Natural killer cell (primary cell): ENCODE measurements at regions of chr3 and their contacts with region 1.

Region 1: DNA sequence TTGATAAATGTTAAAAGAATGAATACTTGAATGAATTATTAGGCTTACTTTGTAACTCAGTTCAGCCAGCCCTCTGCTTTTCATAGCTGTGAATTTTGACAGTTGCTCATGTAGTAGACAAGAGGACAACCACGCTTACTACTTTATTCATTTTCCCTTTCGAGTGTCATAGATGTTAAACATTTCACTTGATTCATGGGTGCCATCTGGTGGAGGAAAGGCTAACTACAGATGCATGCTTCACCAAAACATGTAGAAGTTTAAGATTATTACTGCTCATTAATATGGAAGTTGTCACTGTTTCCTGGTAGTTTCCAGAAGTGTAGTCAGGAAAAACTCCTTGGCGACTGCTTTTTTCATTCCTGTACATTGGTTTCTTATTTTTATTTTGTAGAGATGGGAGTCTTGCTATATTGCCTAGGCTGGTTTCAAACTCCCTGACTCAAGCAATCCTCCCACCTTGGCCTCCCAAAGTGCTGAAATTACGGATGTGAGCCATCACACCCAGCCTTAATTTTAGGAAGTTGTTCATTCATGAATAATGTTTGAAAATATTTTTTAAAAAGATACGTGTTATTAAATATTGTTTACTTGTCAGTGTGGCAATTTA is 163.2 kb downstream of the B3GALNT1 start:
- DNase-seq: peak; percentile 62 to 83
- ATAC-seq: peak; percentile 89 to 99 (median 98)
- H3K4me3 ChIP-seq: no peak overlapping the region
- H3K4me3 Mint-ChIP-seq: no peak overlapping the region
- H3K27ac ChIP-seq: no peak overlapping the region
- H3K27ac Mint-ChIP-seq: peak overlapping the region in 1 of 2 donors; percentile 67
- H3K4me1 ChIP-seq: no peaks in the 10 kb centered on the region
- H3K4me1 Mint-ChIP-seq: peaks cover 12 to 20% of the 10 kb centered on the region in 2 donors
- H3K27me3 ChIP-seq: no peaks in the 10 kb centered on the region
- H3K27me3 Mint-ChIP-seq: no peaks in the 10 kb centered on the region
- CTCF ChIP-seq: peak; percentile 89

Region 2: GRCh38 chr3:160686955-160687535 is 254.9 kb before region 1 on chr3:
- intact Hi-C with region 1: loop called (anchors 5 kb)
- DNase-seq: peak in 1 of 2 donors; percentile 40
- ATAC-seq: no peak
- H3K4me3 ChIP-seq: no peak overlapping the region
- H3K4me3 Mint-ChIP-seq: no peak overlapping the region
- H3K27ac ChIP-seq: no peak overlapping the region
- H3K27ac Mint-ChIP-seq: no peak overlapping the region
- H3K4me1 ChIP-seq: no peaks in the 10 kb centered on the region
- H3K4me1 Mint-ChIP-seq: no peaks in the 10 kb centered on the region
- H3K27me3 ChIP-seq: no peaks in the 10 kb centered on the region
- H3K27me3 Mint-ChIP-seq: peaks cover 0 to 2% of the 10 kb centered on the region in 2 donors
- CTCF ChIP-seq: peak; percentile 34

Region 3: GRCh38 chr3:160707187-160707794 is 234.7 kb before region 1 on chr3:
- intact Hi-C with region 1: loop called (anchors 1 kb)
- DNase-seq: peak in 1 of 2 donors; percentile 78
- ATAC-seq: peak; percentile 52 to 87 (median 86)
- H3K4me3 ChIP-seq: no peak overlapping the region
- H3K4me3 Mint-ChIP-seq: no peak overlapping the region
- H3K27ac ChIP-seq: no peak overlapping the region
- H3K27ac Mint-ChIP-seq: no peak overlapping the region
- H3K4me1 ChIP-seq: no peaks in the 10 kb centered on the region
- H3K4me1 Mint-ChIP-seq: no peaks in the 10 kb centered on the region
- H3K27me3 ChIP-seq: peaks cover 2% of the 10 kb centered on the region
- H3K27me3 Mint-ChIP-seq: peaks cover 26 to 70% of the 10 kb centered on the region in 2 donors
- CTCF ChIP-seq: peak; percentile 75

Region 4: DNA sequence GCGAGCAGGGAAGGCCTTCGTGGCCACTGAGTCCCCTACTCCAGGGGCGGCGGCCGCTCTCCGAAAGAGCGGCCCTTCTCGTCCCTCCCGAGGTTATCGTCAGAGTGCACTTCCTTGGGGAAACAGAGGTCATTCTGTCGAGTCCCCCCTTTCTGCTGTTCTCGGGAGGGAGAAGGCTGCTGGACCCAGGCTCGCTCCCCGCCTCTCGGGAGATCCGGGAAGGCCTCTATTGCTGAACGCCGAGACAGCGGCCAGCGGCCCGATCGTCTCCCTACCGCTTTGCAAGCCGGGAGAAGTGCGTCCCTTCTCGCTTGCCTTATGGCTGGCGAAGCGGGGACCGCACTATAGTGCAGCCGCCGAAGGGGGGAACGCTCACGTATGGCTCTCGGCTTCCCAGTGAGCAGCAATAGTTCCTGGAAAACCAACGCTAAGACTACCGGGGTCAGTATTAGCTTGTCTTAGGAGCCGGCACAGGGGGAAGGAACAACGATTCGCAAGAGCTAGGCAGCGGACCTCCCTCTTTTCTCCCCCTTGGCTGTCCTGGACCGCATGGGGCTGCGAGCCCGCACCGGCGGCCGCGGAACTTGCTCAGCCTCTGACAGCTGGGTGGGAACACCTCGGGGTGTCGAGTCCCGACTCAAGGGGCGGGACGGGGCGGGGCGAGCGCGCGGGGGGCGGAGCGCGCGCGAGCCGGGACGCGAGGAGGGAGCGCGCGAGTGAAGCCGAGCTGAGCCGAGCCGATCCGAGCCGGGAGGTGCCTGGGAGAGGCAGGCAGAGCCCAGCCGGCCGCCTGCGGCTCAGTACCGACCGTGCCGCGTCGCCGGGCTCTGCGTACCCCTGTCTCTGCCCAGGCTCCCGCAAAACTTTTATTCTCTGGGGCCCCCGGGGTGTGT is 186.9 kb before region 1 on chr3:
- intact Hi-C with region 1: loop called (anchors 5 kb)
- DNase-seq: peak; percentile 81 to 94
- ATAC-seq: peak; percentile 83 to 93 (median 84)
- H3K4me3 ChIP-seq: peak overlapping the region; percentile 93
- H3K4me3 Mint-ChIP-seq: peak overlapping the region; percentile 97
- H3K27ac ChIP-seq: peak overlapping the region; percentile 78
- H3K27ac Mint-ChIP-seq: peak overlapping the region; percentile 91 to 92
- H3K4me1 ChIP-seq: peaks cover 28% of the 10 kb centered on the region
- H3K4me1 Mint-ChIP-seq: peaks cover 52 to 54% of the 10 kb centered on the region in 2 donors
- H3K27me3 ChIP-seq: no peaks in the 10 kb centered on the region
- H3K27me3 Mint-ChIP-seq: no peaks in the 10 kb centered on the region
- CTCF ChIP-seq: no peak

Region 5: GRCh38 chr3:160851629-160852210 is 90.3 kb before region 1 on chr3:
- intact Hi-C with region 1: no loop called
- DNase-seq: no peak
- ATAC-seq: no peak
- H3K4me3 ChIP-seq: no peak overlapping the region
- H3K4me3 Mint-ChIP-seq: no peak overlapping the region
- H3K27ac ChIP-seq: no peak overlapping the region
- H3K27ac Mint-ChIP-seq: no peak overlapping the region
- H3K4me1 ChIP-seq: no peaks in the 10 kb centered on the region
- H3K4me1 Mint-ChIP-seq: peaks cover 47 to 59% of the 10 kb centered on the region in 2 donors
- H3K27me3 ChIP-seq: no peaks in the 10 kb centered on the region
- H3K27me3 Mint-ChIP-seq: no peaks in the 10 kb centered on the region
- CTCF ChIP-seq: no peak

Region 6: GRCh38 chr3:161284989-161285388 is 343.0 kb after region 1 on chr3:
- intact Hi-C with region 1: loop called (anchors 10 kb)
- DNase-seq: no peak
- ATAC-seq: no peak
- H3K4me3 ChIP-seq: no peak overlapping the region
- H3K4me3 Mint-ChIP-seq: no peak overlapping the region
- H3K27ac ChIP-seq: no peak overlapping the region
- H3K27ac Mint-ChIP-seq: no peak overlapping the region
- H3K4me1 ChIP-seq: no peaks in the 10 kb centered on the region
- H3K4me1 Mint-ChIP-seq: no peaks in the 10 kb centered on the region
- H3K27me3 ChIP-seq: no peaks in the 10 kb centered on the region
- H3K27me3 Mint-ChIP-seq: no peaks in the 10 kb centered on the region
- CTCF ChIP-seq: no peak

Region 7: DNA sequence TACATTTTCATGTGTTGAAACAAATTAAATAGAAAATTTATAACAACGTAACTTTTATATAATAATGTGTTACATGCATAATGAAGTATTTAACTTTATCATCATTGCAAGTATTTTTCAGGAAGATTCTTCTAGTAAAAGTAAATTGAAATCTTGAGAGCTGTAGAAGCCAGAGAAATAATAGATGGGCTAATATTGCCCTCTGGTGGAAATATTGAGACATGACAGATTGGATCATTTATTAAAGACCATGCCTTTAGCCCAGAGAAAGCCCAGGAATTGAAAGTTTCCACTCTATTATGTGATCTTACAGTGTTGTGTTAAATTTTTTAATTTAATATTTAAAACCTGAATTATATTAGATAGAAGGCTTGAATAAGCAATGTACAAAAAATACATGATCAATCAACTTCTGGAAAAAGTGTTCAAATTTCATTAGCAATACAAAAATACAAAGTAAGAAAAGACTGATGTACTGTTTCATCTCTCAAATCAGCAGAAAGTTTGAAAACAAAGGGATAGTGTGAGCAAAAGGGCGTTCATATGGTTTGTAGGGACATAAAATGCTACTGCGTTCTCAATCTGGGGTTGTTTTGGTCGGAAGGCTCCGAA is 482.0 kb after region 1 on chr3:
- intact Hi-C with region 1: loop called (anchors 5 kb)
- DNase-seq: peak in 1 of 2 donors; percentile 68
- ATAC-seq: peak; percentile 61 to 69 (median 64)
- H3K4me3 ChIP-seq: no peak overlapping the region
- H3K4me3 Mint-ChIP-seq: no peak overlapping the region
- H3K27ac ChIP-seq: no peak overlapping the region
- H3K27ac Mint-ChIP-seq: no peak overlapping the region
- H3K4me1 ChIP-seq: no peaks in the 10 kb centered on the region
- H3K4me1 Mint-ChIP-seq: no peaks in the 10 kb centered on the region
- H3K27me3 ChIP-seq: no peaks in the 10 kb centered on the region
- H3K27me3 Mint-ChIP-seq: peaks cover 8 to 22% of the 10 kb centered on the region in 2 donors
- CTCF ChIP-seq: peak; percentile 96